ENCODE measurements at regions of chr2 and their contacts with region 1.

Region 1: DNA sequence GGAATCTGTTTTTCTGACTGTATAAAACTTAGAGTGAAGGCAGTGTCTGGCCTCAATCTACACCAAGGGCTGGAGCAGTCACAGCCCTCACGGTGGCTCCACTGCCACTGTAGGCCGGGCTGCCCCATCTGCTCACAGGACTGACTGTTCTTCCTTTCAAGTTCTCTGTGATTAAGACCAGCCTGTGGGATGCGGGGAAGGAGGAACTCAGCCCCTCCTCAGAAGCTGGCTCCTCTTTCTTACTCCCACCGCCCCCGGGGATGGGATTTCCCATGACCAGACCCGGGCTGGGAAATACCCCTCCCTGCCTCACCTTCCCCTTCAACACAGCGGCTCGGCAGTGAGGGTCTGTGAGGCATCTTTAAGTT is 106.0 kb downstream of the COPS8 start:
- DNase-seq: no peak
- ATAC-seq: peak in 3 of 4 donors; percentile 35 to 57 (median 50)
- H3K4me3 ChIP-seq: no peak overlapping the region
- H3K27ac ChIP-seq: peak overlapping the region in 11 of 12 donors; percentile 4 to 84 (median 73)
- H3K4me1 ChIP-seq: peaks cover 0 to 31% (median 7%) of the 10 kb centered on the region in 12 donors
- H3K27me3 ChIP-seq: no peaks in the 10 kb centered on the region
- CTCF ChIP-seq: no peak
- POLR2A ChIP-seq: no peak

Region 2: GRCh38 chr2:237035781-237036475 is 155.8 kb before region 1 on chr2:
- intact Hi-C with region 1: no loop called
- DNase-seq: no peak
- ATAC-seq: no peak
- H3K4me3 ChIP-seq: no peak overlapping the region
- H3K27ac ChIP-seq: no peak overlapping the region
- H3K4me1 ChIP-seq: peaks cover 0 to 3% (median 0%) of the 10 kb centered on the region in 12 donors
- H3K27me3 ChIP-seq: no peaks in the 10 kb centered on the region
- CTCF ChIP-seq: no peak
- POLR2A ChIP-seq: no peak

Region 3: GRCh38 chr2:237177052-237177451 is 14.6 kb before region 1 on chr2:
- intact Hi-C with region 1: loop called in 1 of 10 experiments (anchors 2 kb)
- DNase-seq: no peak
- ATAC-seq: no peak
- H3K4me3 ChIP-seq: no peak overlapping the region
- H3K27ac ChIP-seq: no peak overlapping the region
- H3K4me1 ChIP-seq: peaks cover 0 to 14% (median 0%) of the 10 kb centered on the region in 12 donors
- H3K27me3 ChIP-seq: no peaks in the 10 kb centered on the region
- CTCF ChIP-seq: no peak
- POLR2A ChIP-seq: no peak

Measured in heart left ventricle (tissue), 16 donors.